ENCODE measurements at regions of chr3 and their contacts with region 1.

Region 1: GRCh38 chr3:138923531-138923994 is 23.4 kb downstream of the FOXL2 start:
- DNase-seq: peak; percentile 93
- H3K4me3 Mint-ChIP-seq: no peak overlapping the region
- H3K27ac Mint-ChIP-seq: peak overlapping the region; percentile 15
- H3K4me1 Mint-ChIP-seq: peaks cover 17% of the 10 kb centered on the region
- H3K27me3 Mint-ChIP-seq: no peaks in the 10 kb centered on the region
- CTCF ChIP-seq: peak; percentile 79

Region 2: GRCh38 chr3:138180375-138181029 is 743.1 kb before region 1 on chr3:
- CTCF ChIA-PET with region 1: interaction called, 3 read pairs
- POLR2A ChIA-PET with region 1: no interaction called
- intact Hi-C with region 1: loop called (anchors 1 kb)
- DNase-seq: peak; percentile 61
- H3K4me3 Mint-ChIP-seq: no peak overlapping the region
- H3K27ac Mint-ChIP-seq: no peak overlapping the region
- H3K4me1 Mint-ChIP-seq: no peaks in the 10 kb centered on the region
- H3K27me3 Mint-ChIP-seq: peaks cover 11% of the 10 kb centered on the region
- CTCF ChIP-seq: peak; percentile 48

Region 3: DNA sequence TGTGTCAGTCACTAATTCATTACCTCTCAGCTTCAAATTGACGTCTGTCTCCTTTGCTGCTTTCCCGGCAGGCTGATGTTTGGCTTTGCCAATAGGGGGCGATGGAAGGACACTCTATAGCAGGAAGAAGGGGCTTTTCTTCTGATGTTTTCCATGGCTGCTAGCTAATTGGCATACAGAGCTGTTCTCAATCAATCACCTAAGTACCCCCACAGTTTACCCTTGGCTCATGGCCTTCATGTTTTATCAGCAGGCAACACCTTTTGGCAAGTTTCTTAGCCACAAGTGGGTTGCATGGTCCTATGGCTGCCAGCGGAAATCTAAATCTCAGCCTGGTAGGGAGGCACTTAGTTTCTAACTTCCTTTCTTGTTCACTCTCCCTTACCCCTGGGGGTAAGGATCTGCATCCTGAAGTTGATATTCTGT is 444.1 kb before region 1 on chr3:
- CTCF ChIA-PET with region 1: interaction called, 7 read pairs
- POLR2A ChIA-PET with region 1: no interaction called
- intact Hi-C with region 1: loop called (anchors 2 kb)
- DNase-seq: peak; percentile 62
- H3K4me3 Mint-ChIP-seq: no peak overlapping the region
- H3K27ac Mint-ChIP-seq: peak overlapping the region; percentile 57
- H3K4me1 Mint-ChIP-seq: peaks cover 6% of the 10 kb centered on the region
- H3K27me3 Mint-ChIP-seq: no peaks in the 10 kb centered on the region
- CTCF ChIP-seq: peak; percentile 88

Region 4: DNA sequence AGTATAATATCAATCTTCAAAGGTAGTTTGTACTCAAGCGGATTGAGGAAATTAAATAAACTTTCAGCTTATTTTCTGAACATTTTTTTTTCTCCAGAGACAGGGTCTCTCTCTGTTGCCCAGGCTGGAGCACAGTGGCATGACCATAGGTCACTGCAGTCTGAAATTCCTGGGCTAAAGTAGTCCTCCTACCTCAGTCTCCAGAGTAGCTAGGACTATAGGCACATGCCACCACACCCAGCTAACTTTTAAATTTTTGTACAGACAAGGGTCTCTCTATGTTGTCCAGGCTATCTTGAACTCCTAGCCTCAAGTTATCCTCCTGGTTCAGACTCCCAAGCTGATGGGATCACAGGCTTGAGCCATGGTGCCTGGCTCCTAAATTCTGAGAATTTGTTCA is 217.9 kb before region 1 on chr3:
- CTCF ChIA-PET with region 1: interaction called, 44 read pairs
- POLR2A ChIA-PET with region 1: no interaction called
- intact Hi-C with region 1: no loop called
- DNase-seq: no peak
- H3K4me3 Mint-ChIP-seq: no peak overlapping the region
- H3K27ac Mint-ChIP-seq: no peak overlapping the region
- H3K4me1 Mint-ChIP-seq: no peaks in the 10 kb centered on the region
- H3K27me3 Mint-ChIP-seq: no peaks in the 10 kb centered on the region
- CTCF ChIP-seq: no peak

Region 5: GRCh38 chr3:138824114-138824506 is 99.5 kb before region 1 on chr3:
- CTCF ChIA-PET with region 1: interaction called, 10 read pairs
- POLR2A ChIA-PET with region 1: no interaction called
- intact Hi-C with region 1: no loop called
- DNase-seq: no peak
- H3K4me3 Mint-ChIP-seq: no peak overlapping the region
- H3K27ac Mint-ChIP-seq: peak overlapping the region; percentile 36
- H3K4me1 Mint-ChIP-seq: peaks cover 5% of the 10 kb centered on the region
- H3K27me3 Mint-ChIP-seq: no peaks in the 10 kb centered on the region
- CTCF ChIP-seq: no peak

Region 6: DNA sequence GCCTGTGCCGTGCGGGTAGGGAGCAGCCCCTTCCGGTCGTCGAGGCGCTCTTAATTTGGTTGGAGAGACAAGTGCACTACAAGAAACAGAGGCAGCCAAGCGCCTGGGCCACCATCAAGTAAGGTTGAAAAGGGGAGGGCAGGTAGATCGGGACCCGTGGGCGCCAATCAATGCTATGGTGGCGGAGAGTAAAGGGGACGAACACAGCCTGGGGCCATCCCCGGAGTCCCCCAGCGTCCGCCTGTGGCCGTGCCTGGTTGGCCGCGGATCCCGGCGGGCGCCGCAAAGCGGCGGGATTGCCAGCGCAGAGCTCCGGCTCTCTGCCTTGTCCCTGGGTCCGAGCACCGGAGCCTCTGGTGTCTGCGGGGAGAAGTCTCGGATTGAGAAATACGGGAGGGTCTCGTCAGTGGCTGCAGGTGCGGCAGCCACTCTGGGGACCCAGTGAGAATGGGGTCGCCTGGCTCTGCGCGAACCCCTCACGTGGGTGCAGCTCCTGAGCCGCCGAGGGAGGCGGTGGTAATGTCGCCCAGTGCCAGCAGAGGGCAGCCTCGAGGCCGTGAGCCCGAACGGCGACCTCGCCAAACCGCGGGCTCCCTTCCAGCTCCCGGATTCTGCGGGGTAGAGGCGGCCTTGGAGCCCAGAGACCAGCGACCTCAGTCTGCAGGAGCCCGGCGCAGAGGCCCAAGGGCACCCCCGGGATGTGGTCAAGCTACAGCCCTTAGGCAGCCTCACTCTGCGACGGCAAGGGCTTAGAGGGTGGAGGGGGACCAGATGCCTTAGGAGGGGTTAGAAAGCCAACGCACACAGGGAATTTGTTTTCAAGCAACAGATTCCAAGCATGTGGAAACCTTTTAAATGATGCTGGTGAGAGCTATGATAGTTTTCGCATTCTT is 12.5 kb after region 1 on chr3:
- CTCF ChIA-PET with region 1: interaction called, 112 read pairs
- POLR2A ChIA-PET with region 1: interaction called, 4 read pairs
- intact Hi-C with region 1: no loop called
- DNase-seq: peak; percentile 59
- H3K4me3 Mint-ChIP-seq: peak overlapping the region; percentile 68
- H3K27ac Mint-ChIP-seq: no peak overlapping the region
- H3K4me1 Mint-ChIP-seq: no peaks in the 10 kb centered on the region
- H3K27me3 Mint-ChIP-seq: peaks cover 16% of the 10 kb centered on the region
- CTCF ChIP-seq: peak; percentile 84

Region 7: GRCh38 chr3:138947060-138947852 is 23.7 kb after region 1 on chr3 and contains the starts of genes FOXL2 and FOXL2NB:
- CTCF ChIA-PET with region 1: no interaction called
- POLR2A ChIA-PET with region 1: no interaction called
- intact Hi-C with region 1: no loop called
- DNase-seq: no peak
- H3K4me3 Mint-ChIP-seq: peak within 1 kb of the TSS; percentile 61
- H3K27ac Mint-ChIP-seq: no peak within 1 kb of the TSS
- H3K4me1 Mint-ChIP-seq: no peaks in the 10 kb centered on the region
- H3K27me3 Mint-ChIP-seq: peaks cover 51% of the 10 kb centered on the region
- CTCF ChIP-seq: no peak
- total RNA-seq, gene FOXL2: 0.17 and 0.30 TPM in 2 replicates
- total RNA-seq, gene FOXL2NB: 0.14 and 0.20 TPM in 2 replicates

Measured in MCF 10A (cell line).